ENCODE measurements at regions of chr4 and their contacts with region 1.

Region 1: DNA sequence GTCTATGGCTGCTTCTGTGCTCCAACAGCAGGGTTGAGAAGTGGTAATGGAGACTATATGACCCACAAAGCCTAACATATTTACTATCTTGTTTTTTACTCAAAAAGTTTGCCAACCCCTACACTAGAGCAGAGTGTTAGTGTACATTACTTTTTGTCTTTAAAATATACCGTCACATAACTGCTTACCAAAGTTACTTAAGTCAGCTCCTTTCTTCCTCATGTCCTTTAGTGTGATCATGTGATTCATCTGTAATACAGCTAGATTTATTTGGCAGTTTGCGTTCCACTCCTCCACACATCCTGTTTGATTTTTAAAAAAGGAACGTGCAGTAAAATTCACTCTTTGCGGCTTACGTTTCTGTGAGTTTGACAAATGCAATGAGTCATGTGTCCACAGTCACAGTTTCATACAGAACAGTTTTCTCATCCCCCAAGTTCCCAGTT is 162.4 kb upstream of the GPRIN3 start:
- DNase-seq: peak; percentile 19
- H3K4me3 Mint-ChIP-seq: peak overlapping the region; percentile 16
- H3K27ac Mint-ChIP-seq: peak overlapping the region; percentile 18
- H3K4me1 Mint-ChIP-seq: peaks cover 21% of the 10 kb centered on the region
- H3K27me3 Mint-ChIP-seq: no peaks in the 10 kb centered on the region

Region 2: GRCh38 chr4:88803600-88804096 is 666.3 kb before region 1 on chr4:
- intact Hi-C with region 1: loop called (anchors 1 kb)
- DNase-seq: peak; percentile 17
- H3K4me3 Mint-ChIP-seq: no peak overlapping the region
- H3K27ac Mint-ChIP-seq: no peak overlapping the region
- H3K4me1 Mint-ChIP-seq: peaks cover 13% of the 10 kb centered on the region
- H3K27me3 Mint-ChIP-seq: peaks cover 16% of the 10 kb centered on the region

Region 3: DNA sequence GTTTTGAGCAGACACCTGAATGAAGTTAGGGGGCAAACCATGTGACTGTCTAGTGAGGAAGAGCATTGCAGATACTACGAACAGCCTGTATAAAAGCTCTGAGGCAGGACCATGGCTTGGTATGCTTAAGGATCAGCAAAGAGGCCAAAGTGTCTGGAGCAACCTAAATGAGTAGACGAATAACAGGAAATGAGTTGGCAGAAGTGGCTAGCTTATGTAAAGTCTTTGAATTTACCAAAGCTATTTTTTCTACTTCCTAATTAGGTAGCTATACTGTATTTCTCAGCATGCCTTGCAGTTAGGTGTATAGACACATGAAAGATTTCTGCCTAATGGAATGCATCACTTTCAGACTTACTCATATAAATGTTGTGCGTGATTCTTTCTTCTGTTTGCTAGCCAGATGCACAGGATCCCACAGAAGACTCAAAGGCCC is 153.0 kb before region 1 on chr4:
- intact Hi-C with region 1: loop called (anchors 5 kb)
- DNase-seq: no peak
- H3K4me3 Mint-ChIP-seq: peak overlapping the region; percentile 64
- H3K27ac Mint-ChIP-seq: peak overlapping the region; percentile 84
- H3K4me1 Mint-ChIP-seq: peaks cover 38% of the 10 kb centered on the region
- H3K27me3 Mint-ChIP-seq: no peaks in the 10 kb centered on the region

Region 4: DNA sequence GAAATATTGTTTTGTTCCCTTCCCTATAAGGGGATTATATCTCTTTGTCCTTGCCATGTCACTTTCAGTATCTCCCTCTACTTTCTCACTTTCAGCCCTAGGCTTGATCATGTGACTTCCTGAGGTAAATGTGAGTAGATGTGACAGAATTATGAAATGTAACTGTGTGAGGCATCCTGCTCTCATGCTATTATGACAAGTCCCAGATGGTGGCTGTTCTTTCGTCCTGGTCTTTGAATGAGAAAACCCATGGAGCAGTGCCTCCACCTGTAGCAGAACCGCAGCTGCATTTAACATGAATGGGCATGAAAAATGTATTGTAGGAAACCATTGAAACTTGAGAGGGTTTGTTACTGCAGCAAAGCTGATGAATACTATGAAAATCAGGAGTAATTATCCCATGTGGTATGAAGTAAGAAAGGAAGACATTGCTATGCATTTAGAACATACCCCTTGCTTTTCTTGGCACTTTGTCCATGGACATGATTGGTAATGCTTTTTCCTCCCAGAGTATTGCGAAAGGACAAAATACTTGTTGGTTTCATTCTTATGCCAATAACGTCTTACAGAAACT is 39.8 kb after region 1 on chr4:
- intact Hi-C with region 1: loop called (anchors 1 kb)
- DNase-seq: peak; percentile 11
- H3K4me3 Mint-ChIP-seq: no peak overlapping the region
- H3K27ac Mint-ChIP-seq: no peak overlapping the region
- H3K4me1 Mint-ChIP-seq: peaks cover 17% of the 10 kb centered on the region
- H3K27me3 Mint-ChIP-seq: peaks cover 23% of the 10 kb centered on the region

Region 5: GRCh38 chr4:89836897-89837384 is 367.0 kb after region 1 on chr4 and contains the start of gene SNCA:
- intact Hi-C with region 1: loop called (anchors 5 kb)
- DNase-seq: peak; percentile 27
- H3K4me3 Mint-ChIP-seq: peak within 1 kb of the TSS; percentile 80
- H3K27ac Mint-ChIP-seq: no peak within 1 kb of the TSS
- H3K4me1 Mint-ChIP-seq: peaks cover 33% of the 10 kb centered on the region
- H3K27me3 Mint-ChIP-seq: peaks cover 71% of the 10 kb centered on the region
- total RNA-seq, gene SNCA: 0.18 and 1.1 TPM in 2 replicates

Measured in activated T-helper 1 cell treated with anti-CD3 and anti-CD28 coated beads, Interleukin-12 subunit alpha, Interleukin-12 subunit beta, Interleukin-2, Interleukin-4 antibody, amounts not matched to agents 30 ng/mL and 10 ng/mL and 1 ng/mL, durations not matched to agents 14 hours and 24 hours and 36 hours (primary cell).